Psoas muscle (tissue), 8 donors: ENCODE measurements at regions of chr14 and their contacts with region 1.

Region 1: GRCh38 chr14:64986578-64987571 is at the start of gene FNTB:
- DNase-seq: peak; percentile 97 to 98
- ATAC-seq: peak; percentile 96 to 97 (median 97)
- H3K4me3 ChIP-seq: peak within 1 kb of the TSS; percentile 84
- H3K27ac ChIP-seq: peak within 1 kb of the TSS; percentile 90
- H3K4me1 ChIP-seq: peaks cover 15% of the 10 kb centered on the region
- H3K27me3 ChIP-seq: no peaks in the 10 kb centered on the region
- CTCF ChIP-seq: peak; percentile 80
- total RNA-seq, gene FNTB: 18.8 to 28.8 (median 20.1) TPM

Region 2: GRCh38 chr14:64823305-64823861 is 163.5 kb before region 1 on chr14:
- intact Hi-C with region 1: loop called (anchors 5 to 10 kb)
- DNase-seq: peak; percentile 83 to 91
- ATAC-seq: peak; percentile 36 to 64 (median 47)
- H3K4me3 ChIP-seq: peak overlapping the region; percentile 60
- H3K27ac ChIP-seq: peak overlapping the region; percentile 96
- H3K4me1 ChIP-seq: peaks cover 38% of the 10 kb centered on the region
- H3K27me3 ChIP-seq: no peaks in the 10 kb centered on the region
- CTCF ChIP-seq: peak; percentile 70

Region 3: GRCh38 chr14:64942531-64943111 is 44.3 kb before region 1 on chr14 and contains the start of gene GPX2:
- intact Hi-C with region 1: no loop called
- DNase-seq: no peak
- ATAC-seq: no peak
- H3K4me3 ChIP-seq: no peak within 1 kb of the TSS
- H3K27ac ChIP-seq: no peak within 1 kb of the TSS
- H3K4me1 ChIP-seq: peaks cover 5% of the 10 kb centered on the region
- H3K27me3 ChIP-seq: no peaks in the 10 kb centered on the region
- CTCF ChIP-seq: no peak
- total RNA-seq, gene GPX2: not detected

Region 4: DNA sequence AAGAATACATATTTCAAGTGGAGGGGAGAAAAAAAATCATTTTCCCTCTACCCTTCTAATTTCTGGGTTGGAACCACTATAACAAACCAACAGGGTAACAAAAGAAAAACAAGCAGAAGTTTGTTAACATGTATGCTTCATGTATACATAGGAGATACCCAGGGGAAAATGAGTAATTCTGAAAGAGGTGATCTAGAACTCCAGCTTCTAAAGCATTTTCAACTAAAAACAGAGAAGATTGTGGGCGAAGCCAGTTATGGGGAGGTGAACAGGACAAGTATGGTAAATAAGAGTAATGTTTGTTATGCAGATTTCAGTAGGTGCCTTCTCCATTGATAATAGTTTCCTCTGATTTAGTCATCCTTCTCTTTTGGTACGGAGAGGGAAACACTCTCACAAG is 16.5 kb after region 1 on chr14:
- intact Hi-C with region 1: no loop called
- DNase-seq: no peak
- ATAC-seq: no peak
- H3K4me3 ChIP-seq: no peak overlapping the region
- H3K27ac ChIP-seq: no peak overlapping the region
- H3K4me1 ChIP-seq: peaks cover 25% of the 10 kb centered on the region
- H3K27me3 ChIP-seq: no peaks in the 10 kb centered on the region
- CTCF ChIP-seq: no peak

Region 5: DNA sequence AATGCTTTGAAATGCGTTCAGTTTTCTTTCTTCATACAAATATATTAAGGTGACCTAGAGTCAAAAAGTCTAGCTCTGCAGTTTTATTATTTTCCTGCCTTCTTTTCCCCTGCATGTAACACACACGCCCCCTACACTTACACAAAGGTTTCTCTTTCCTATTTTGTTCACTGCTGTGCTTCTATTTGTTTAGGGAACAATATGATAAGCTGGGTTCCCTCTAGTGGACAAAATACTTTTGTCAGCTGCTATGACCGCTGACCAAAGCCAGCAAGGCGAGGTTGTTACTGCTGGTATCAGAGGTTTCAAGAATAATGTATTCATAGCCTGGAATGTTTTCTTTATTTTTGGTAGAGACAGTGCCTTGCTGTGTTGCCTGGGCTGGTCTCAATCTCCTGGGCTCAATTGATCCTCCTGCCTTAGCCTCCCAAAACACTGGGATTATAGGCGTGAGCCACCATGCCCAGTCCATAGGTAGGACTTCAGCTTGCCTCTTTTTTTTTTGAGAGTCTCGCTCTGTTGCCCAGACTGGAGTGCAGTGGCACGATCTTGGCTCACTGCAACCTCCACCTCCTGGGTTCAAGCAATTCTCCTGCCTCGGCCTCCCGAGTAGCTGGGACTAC is 33.2 kb after region 1 on chr14:
- intact Hi-C with region 1: loop called (anchors 2 to 5 kb)
- DNase-seq: no peak
- ATAC-seq: peak; percentile 73 to 79 (median 76)
- H3K4me3 ChIP-seq: no peak overlapping the region
- H3K27ac ChIP-seq: no peak overlapping the region
- H3K4me1 ChIP-seq: peaks cover 26% of the 10 kb centered on the region
- H3K27me3 ChIP-seq: no peaks in the 10 kb centered on the region
- CTCF ChIP-seq: peak; percentile 73

Region 6: GRCh38 chr14:65156568-65157366 is 169.9 kb after region 1 on chr14:
- intact Hi-C with region 1: loop called in 1 of 2 experiments (anchors 5 kb)
- DNase-seq: peak; percentile 40 to 71
- ATAC-seq: peak; percentile 59 to 87 (median 76)
- H3K4me3 ChIP-seq: peak overlapping the region; percentile 45
- H3K27ac ChIP-seq: peak overlapping the region; percentile 64
- H3K4me1 ChIP-seq: peaks cover 10% of the 10 kb centered on the region
- H3K27me3 ChIP-seq: no peaks in the 10 kb centered on the region
- CTCF ChIP-seq: no peak

Region 7: GRCh38 chr14:65824285-65824977 is 837.6 kb after region 1 on chr14:
- intact Hi-C with region 1: loop called in 1 of 2 experiments (anchors 5 kb)
- DNase-seq: no peak
- ATAC-seq: peak; percentile 82 to 87 (median 86)
- H3K4me3 ChIP-seq: no peak overlapping the region
- H3K27ac ChIP-seq: no peak overlapping the region
- H3K4me1 ChIP-seq: no peaks in the 10 kb centered on the region
- H3K27me3 ChIP-seq: no peaks in the 10 kb centered on the region
- CTCF ChIP-seq: peak; percentile 87